GM10248 (cell line): ENCODE measurements at regions of chr3 and their contacts with region 1.

Region 1: GRCh38 chr3:90091204-90091924 is 983.9 kb downstream of the EPHA3 start:
- DNase-seq: no peak
- CTCF ChIP-seq: peak; percentile 12

Region 2: GRCh38 chr3:90102146-90102545 is 10.8 kb after region 1 on chr3:
- CTCF ChIA-PET with region 1: interaction called, 11 read pairs
- POLR2A ChIA-PET with region 1: no interaction called
- DNase-seq: no peak
- CTCF ChIP-seq: no peak